ENCODE measurements at regions of chr16 and their contacts with region 1.

Region 1: DNA sequence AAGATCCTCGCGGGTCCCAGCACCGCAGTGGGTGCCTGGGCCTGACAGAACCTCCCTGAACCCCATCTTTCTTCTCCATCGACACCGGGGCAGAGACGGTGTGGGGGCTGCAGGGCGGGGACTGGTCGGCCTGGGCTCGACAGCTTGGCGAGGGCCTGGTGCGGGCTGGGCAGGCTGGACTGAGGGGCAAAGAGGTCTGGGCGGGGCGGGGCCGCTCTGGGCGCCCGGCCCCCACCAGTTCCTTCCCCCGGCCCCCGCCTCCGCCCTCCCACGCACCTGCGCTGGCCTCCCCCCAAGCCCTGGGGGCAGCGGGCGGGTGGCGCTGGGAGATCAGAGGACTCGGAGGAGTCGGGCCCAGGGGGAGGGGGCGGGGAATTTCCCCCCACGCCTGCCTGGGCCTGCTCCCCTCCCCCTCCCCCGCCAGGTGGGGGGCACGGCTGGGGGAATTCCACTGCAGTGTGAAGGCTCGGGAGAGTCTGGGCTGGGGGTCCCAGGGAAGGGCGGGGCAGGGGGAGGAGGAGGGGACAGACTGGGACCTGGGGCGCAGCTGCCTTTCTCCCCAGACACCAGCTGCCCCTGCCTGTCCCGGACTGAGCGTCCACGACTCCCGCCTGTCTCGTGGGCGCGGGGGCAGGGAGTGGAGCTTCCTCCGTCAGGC is 881 bp upstream of the KREMEN2 start:
- DNase-seq: no peak
- ATAC-seq: no peak; a peak in 1 of 6 replicates
- H3K4me3 ChIP-seq: peak overlapping the region; percentile 51
- H3K27ac ChIP-seq: peak overlapping the region; percentile 57 to 78
- H3K4me1 ChIP-seq: peaks cover 10% of the 10 kb centered on the region; the same call in 2 of the 3 replicates
- CTCF ChIP-seq: no peak
- EP300 ChIP-seq: no peak
- POLR2A ChIP-seq: no peak
- RAD21 ChIP-seq: no peak

Region 2: DNA sequence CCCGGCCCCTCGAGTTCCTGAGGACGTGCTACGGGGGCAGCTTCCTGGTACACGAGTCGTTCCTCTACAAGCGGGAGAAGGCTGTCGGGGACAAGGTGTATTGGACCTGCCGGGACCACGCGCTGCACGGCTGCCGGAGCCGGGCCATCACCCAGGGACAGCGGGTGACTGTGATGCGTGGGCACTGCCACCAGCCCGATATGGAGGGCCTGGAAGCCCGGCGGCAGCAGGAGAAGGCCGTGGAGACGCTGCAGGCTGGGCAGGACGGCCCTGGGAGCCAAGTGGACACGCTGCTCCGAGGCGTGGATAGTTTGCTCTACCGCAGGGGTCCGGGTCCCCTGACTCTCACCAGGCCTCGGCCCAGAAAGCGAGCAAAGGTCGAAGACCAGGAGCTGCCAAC is 30.1 kb before region 1 on chr16:
- CTCF ChIA-PET with region 1: interaction called, 33 read pairs
- POLR2A ChIA-PET with region 1: no interaction called
- DNase-seq: no peak
- ATAC-seq: no peak
- H3K4me3 ChIP-seq: no peak overlapping the region
- H3K27ac ChIP-seq: no peak overlapping the region
- H3K4me1 ChIP-seq: no peaks in the 10 kb centered on the region
- CTCF ChIP-seq: no peak
- EP300 ChIP-seq: no peak
- POLR2A ChIP-seq: no peak
- RAD21 ChIP-seq: no peak

Region 3: DNA sequence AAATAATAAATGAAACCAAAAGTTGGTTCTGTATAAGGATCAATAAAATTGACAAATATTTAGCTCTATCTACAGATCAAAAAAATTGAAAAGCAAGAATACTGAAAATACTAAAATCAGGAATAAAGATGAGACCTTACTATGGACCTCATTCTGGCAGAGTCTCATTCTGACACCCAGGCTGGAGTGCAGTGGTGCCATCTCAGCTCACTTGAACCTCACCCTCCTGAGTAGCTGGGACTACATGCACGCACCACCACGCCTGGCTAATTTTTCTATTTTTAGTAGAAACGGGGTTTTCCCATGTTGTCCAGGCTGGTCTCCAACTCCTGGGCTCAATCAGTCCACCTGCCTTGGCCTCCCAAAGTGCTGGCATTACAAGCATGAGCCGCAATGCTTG is 21.1 kb before region 1 on chr16:
- CTCF ChIA-PET with region 1: interaction called, 97 read pairs
- POLR2A ChIA-PET with region 1: interaction called, 4 read pairs
- DNase-seq: no peak
- ATAC-seq: no peak
- H3K4me3 ChIP-seq: no peak overlapping the region
- H3K27ac ChIP-seq: no peak overlapping the region
- H3K4me1 ChIP-seq: no peaks in the 10 kb centered on the region
- CTCF ChIP-seq: no peak
- EP300 ChIP-seq: no peak
- POLR2A ChIP-seq: no peak
- RAD21 ChIP-seq: no peak

Region 4: GRCh38 chr16:2980227-2981086 is 17.3 kb after region 1 on chr16 and contains the start of gene PKMYT1:
- CTCF ChIA-PET with region 1: interaction called, 18 read pairs
- POLR2A ChIA-PET with region 1: interaction called, 3 read pairs
- DNase-seq: peak; percentile 85 to 98
- ATAC-seq: peak; percentile 70 to 82
- H3K4me3 ChIP-seq: peak within 1 kb of the TSS; percentile 71
- H3K27ac ChIP-seq: peak within 1 kb of the TSS; percentile 91 to 95
- H3K4me1 ChIP-seq: peaks cover 18% of the 10 kb centered on the region; the same call in 2 of the 3 replicates
- CTCF ChIP-seq: no peak
- EP300 ChIP-seq: no peak
- POLR2A ChIP-seq: peak; percentile 92
- RAD21 ChIP-seq: no peak
- polyA plus RNA-seq, gene PKMYT1: 8.4 and 10.5 TPM in 2 replicates